PC-3 (cell line): ENCODE measurements at regions of chr5 and their contacts with region 1.

Region 1: GRCh38 chr5:38783011-38783561 is 62.7 kb upstream of the OSMR start:
- DNase-seq: peak; percentile 96
- ATAC-seq: peak; percentile 87
- H3K4me3 ChIP-seq: no peak overlapping the region
- H3K27ac ChIP-seq: peak overlapping the region; percentile 65
- H3K4me1 ChIP-seq: peaks cover 41% of the 10 kb centered on the region
- H3K27me3 ChIP-seq: no peaks in the 10 kb centered on the region
- CTCF ChIP-seq: no peak

Region 2: DNA sequence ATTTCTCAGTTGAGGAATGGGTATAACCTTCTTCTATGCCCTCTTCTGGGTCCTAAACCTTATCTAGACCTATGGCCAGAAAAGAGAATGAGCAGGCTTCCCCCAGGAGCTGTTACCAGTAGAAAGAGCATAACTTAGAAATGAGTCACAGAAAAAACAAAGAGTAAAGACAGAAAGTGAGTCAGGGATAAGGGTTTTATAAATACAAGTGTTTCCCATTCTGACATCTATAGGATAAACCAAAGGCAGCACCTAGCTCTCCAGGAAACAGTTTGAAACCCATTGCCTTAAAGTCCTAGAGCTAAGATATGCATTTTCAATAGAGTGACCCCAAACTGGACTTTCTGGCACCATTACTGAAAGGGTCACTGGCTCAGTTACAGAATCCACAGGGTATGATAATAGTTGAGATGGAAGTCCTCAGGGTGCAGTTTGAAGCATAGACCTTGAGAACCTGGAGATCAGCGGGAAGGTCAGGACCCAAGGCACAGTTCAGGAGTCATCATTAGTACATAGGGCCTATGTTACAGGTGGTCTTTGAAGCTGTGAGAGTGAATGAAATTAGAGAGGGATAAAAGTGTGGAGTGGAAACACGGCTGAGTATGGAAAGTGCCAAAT is 184.0 kb before region 1 on chr5:
- CTCF ChIA-PET with region 1: no interaction called
- POLR2A ChIA-PET with region 1: no interaction called
- intact Hi-C with region 1: loop called (anchors 1 kb)
- DNase-seq: peak; percentile 92
- ATAC-seq: peak; percentile 89
- H3K4me3 ChIP-seq: no peak overlapping the region
- H3K27ac ChIP-seq: peak overlapping the region; percentile 34
- H3K4me1 ChIP-seq: peaks cover 63% of the 10 kb centered on the region
- H3K27me3 ChIP-seq: no peaks in the 10 kb centered on the region
- CTCF ChIP-seq: no peak

Region 3: DNA sequence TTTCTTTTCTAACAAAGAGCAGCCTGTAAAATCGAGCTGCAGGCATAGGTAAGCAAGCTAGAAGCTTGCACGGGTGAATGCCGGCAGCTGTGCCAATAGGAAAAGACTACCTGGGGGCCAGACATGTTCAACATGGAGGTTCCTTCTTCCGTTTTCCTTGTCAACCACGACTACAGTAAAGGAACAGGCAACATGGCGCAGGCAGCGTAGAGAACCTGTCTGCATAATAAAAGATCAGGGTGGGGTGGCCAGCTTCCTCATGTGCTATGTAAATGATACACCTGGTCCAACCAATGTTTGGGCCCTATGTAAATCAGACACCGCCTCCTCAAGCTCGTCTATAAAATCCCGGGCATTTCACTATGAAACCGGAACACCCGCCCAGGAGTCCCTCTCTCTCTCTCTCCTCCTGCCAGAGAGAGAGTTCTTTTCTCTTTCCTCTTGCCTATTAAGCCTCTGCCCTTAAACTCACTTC is 122.9 kb before region 1 on chr5:
- CTCF ChIA-PET with region 1: no interaction called
- POLR2A ChIA-PET with region 1: no interaction called
- intact Hi-C with region 1: loop called (anchors 1 kb)
- DNase-seq: peak; percentile 98
- ATAC-seq: peak; percentile 100
- H3K4me3 ChIP-seq: peak overlapping the region; percentile 69
- H3K27ac ChIP-seq: peak overlapping the region; percentile 74
- H3K4me1 ChIP-seq: peaks cover 10% of the 10 kb centered on the region
- H3K27me3 ChIP-seq: no peaks in the 10 kb centered on the region
- CTCF ChIP-seq: no peak

Region 4: GRCh38 chr5:38739007-38739743 is 43.9 kb before region 1 on chr5:
- CTCF ChIA-PET with region 1: no interaction called
- POLR2A ChIA-PET with region 1: no interaction called
- intact Hi-C with region 1: loop called (anchors 1 kb)
- DNase-seq: peak; percentile 95
- ATAC-seq: peak; percentile 97
- H3K4me3 ChIP-seq: peak overlapping the region; percentile 20; the same call in 1 of the 2 replicates
- H3K27ac ChIP-seq: peak overlapping the region; percentile 83
- H3K4me1 ChIP-seq: peaks cover 21% of the 10 kb centered on the region
- H3K27me3 ChIP-seq: no peaks in the 10 kb centered on the region
- CTCF ChIP-seq: no peak

Region 5: DNA sequence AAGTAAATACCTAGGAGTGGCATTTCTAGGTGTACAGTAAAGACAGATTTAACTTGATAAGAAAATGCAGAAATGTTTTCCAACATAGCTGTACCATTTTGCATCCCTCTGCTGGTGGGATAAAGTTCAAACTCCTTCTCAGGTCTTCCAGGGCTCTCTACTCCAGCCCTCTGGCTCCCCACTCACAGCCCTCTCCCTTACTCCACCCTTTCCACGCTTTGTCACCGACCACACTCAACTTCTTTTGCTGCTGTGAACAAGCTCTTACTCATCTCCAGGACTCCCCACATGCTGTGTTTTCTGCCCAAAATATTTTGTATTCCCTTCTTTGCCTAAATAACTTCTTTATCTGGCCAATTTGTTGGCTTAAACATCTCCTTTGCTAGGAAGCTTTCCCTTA is 27.9 kb before region 1 on chr5:
- CTCF ChIA-PET with region 1: no interaction called
- POLR2A ChIA-PET with region 1: interaction called, 5 read pairs
- intact Hi-C with region 1: loop called (anchors 1 kb)
- DNase-seq: peak; percentile 77
- ATAC-seq: peak; percentile 84
- H3K4me3 ChIP-seq: no peak overlapping the region
- H3K27ac ChIP-seq: peak overlapping the region; percentile 84
- H3K4me1 ChIP-seq: peaks cover 35% of the 10 kb centered on the region
- H3K27me3 ChIP-seq: no peaks in the 10 kb centered on the region
- CTCF ChIP-seq: peak; percentile 29; the same call in 1 of the 2 replicates